Activated T-helper 1 cell treated with anti-CD3 and anti-CD28 coated beads, Interleukin-12 subunit alpha, Interleukin-12 subunit beta, Interleukin-2, Interleukin-4 antibody, amounts not matched to agents 30 ng/mL and 10 ng/mL and 1 ng/mL, durations not matched to agents 14 hours and 24 hours and 36 hours (primary cell): ENCODE measurements at regions of chr17 and their contacts with region 1.

Region 1: DNA sequence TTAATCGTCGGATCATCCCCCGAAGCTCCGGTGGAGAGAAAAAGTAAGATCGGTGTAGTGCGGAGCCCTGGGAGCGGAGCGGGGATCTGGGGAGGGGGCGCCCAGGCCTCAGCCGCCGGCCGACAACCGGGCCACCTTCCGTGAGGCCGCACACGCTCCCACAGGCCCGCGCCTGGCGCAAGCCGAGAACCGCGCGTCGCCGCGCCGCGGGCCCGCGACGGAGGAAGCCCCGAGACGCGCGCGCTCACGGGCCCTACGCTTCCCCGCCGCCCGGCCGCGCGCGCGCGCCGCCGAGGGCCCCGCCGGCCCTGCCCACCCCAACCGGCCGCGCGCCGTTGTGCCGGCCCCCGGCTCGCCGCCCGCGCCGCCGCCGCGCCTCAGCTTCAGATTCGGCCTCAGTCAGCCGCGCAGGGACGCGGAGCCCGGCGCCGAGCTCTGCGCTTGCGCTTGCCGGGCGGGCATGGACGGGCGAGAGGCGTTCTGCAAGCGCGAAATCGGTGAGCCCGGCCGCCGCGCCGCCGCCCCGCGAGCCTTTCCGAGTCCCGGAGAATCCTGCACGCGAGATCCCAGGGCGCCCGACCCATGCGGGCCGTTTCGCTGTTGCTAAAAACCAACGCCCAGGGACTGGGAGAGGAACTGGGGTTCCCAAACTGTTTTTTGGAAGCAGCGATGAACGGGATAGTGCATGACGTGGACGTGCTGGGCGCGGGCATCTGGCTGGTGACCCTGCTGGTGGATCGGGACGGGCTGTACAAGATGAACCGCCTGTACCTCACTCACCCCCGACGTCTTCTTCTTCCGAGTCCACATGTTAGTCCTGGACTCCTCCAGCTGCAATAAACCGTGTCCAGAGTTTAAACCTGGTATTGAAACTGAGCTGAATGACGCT is 28.0 kb upstream of the LRRC37A start:
- DNase-seq: peak; percentile 86
- H3K4me3 Mint-ChIP-seq: peak overlapping the region; percentile 92
- H3K27ac Mint-ChIP-seq: peak overlapping the region; percentile 88
- H3K4me1 Mint-ChIP-seq: peaks cover 39% of the 10 kb centered on the region
- H3K27me3 Mint-ChIP-seq: peaks cover 50% of the 10 kb centered on the region

Region 2: DNA sequence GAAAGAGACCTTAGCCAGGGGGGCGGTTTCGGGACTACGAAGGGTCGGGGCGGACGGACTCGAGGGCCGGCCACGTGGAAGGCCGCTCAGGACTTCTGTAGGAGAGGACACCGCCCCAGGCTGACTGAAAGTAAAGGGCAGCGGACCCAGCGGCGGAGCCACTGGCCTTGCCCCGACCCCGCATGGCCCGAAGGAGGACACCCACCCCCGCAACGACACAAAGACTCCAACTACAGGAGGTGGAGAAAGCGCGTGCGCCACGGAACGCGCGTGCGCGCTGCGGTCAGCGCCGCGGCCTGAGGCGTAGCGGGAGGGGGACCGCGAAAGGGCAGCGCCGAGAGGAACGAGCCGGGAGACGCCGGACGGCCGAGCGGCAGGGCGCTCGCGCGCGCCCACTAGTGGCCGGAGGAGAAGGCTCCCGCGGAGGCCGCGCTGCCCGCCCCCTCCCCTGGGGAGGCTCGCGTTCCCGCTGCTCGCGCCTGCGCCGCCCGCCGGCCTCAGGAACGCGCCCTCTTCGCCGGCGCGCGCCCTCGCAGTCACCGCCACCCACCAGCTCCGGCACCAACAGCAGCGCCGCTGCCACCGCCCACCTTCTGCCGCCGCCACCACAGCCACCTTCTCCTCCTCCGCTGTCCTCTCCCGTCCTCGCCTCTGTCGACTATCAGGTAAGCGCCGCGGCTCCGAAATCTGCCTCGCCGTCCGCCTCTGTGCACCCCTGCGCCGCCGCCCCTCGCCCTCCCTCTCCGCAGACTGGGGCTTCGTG is 372.7 kb before region 1 on chr17 and contains the start of gene MAPT:
- intact Hi-C with region 1: loop called (anchors 10 kb)
- DNase-seq: peak; percentile 77
- H3K4me3 Mint-ChIP-seq: peak within 1 kb of the TSS; percentile 74
- H3K27ac Mint-ChIP-seq: peak within 1 kb of the TSS; percentile 61
- H3K4me1 Mint-ChIP-seq: peaks cover 5% of the 10 kb centered on the region
- H3K27me3 Mint-ChIP-seq: peaks cover 57% of the 10 kb centered on the region
- total RNA-seq, gene MAPT: 0.64 and 1.1 TPM in 2 replicates

Region 3: GRCh38 chr17:46002311-46002972 is 264.5 kb before region 1 on chr17:
- intact Hi-C with region 1: no loop called
- DNase-seq: peak; percentile 63
- H3K4me3 Mint-ChIP-seq: no peak overlapping the region
- H3K27ac Mint-ChIP-seq: no peak overlapping the region
- H3K4me1 Mint-ChIP-seq: peaks cover 8% of the 10 kb centered on the region
- H3K27me3 Mint-ChIP-seq: peaks cover 6% of the 10 kb centered on the region

Region 4: DNA sequence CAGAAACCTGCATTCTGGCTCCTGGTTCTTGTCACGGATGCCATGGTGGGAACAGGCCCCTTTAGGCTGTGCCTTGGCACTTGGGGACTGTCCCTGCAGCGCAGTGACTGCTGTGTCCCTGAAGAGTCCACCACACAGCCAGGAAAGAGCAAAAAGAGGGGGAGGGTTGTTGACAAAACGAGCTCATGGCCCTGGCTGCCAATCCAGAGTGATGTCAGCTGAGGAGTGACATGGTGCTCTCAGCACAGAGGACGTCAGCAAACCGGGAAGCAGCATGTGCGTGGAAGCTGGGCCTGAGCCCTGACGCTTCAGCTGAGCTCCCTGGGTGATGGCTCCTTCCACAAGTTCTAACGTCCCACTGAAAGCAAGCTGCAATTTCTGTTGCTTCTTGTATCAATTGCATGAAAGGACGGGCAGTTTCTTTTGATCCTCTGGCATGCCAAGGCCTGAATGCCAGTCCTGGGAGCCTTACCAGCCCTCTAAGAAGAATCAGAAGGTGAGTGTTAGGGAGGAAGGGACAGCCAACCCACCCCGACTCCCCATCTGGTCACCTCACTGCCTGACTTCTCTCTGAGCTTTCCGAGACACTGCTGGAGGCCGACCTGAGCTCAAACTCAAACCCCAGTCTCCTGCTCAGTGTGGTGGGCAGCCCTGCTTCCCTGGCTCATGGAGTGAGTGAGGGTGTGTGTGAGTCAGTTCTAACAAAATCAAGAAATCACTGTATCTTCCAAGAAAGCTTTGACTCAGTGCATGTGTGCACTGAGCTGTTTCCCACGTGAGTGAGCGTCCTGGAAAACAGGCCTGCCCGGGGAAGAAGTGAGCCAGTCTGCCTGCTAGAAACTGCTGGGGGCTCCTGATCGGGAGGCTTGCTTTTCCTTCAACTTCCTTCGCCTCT is 566.3 kb after region 1 on chr17:
- intact Hi-C with region 1: loop called (anchors 10 kb)
- DNase-seq: no peak
- H3K4me3 Mint-ChIP-seq: no peak overlapping the region
- H3K27ac Mint-ChIP-seq: no peak overlapping the region
- H3K4me1 Mint-ChIP-seq: peaks cover 6% of the 10 kb centered on the region
- H3K27me3 Mint-ChIP-seq: peaks cover 19% of the 10 kb centered on the region